HepG2 (cell line): ENCODE measurements at regions of chr22 and their contacts with region 1.

Region 1: DNA sequence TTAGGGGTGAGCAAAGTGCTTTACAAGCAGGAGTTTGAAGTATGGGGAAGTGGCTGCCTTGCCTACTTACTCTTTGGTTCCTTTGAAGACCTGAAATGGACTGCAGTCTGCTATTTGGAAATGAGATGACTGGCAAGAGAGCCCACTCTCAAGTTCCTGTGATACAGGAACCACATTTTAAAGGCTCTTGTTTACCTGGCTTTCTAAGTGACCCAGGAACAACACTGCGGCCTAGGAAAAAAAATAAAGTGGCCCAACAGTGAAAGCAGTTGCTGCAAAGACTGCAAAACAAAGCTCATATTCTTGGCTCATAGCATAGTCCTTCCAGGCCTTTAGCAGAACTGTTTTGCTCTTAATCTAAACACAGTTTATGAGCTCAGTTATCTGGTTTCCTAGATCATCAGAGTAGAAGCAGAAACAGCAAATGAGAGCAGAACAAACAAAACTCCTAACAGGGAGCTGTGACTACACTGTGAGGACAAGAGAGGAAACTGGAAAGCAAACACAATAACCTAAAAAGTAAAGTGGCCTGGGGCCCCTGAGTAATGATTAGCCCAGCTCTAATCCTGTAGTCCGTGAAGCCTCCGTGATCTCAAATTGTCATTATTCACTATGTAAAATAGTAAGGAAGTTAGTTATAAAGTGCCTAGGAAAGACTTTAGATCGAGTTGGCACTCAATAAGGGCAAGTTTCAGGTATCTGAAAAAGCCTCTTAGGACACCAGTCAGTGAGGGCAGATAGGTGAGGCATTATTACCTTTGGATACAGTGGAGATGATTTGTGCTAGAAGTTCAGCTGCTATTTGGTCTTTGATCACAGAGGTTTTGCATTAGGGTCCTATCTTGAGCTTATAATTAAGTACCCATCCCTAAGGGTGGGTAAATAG is 11.5 kb downstream of the CCDC117 start:
- DNase-seq: peak; percentile 96
- ATAC-seq: peak; percentile 98
- H3K4me3 ChIP-seq: peak overlapping the region in 2 of 3 experiments; percentile 17 to 35; a peak in 2 of 6 replicates
- H3K27ac ChIP-seq: peak overlapping the region; percentile 84
- H3K4me1 ChIP-seq: peaks cover 61% of the 10 kb centered on the region
- H3K27me3 ChIP-seq: no peaks in the 10 kb centered on the region
- CTCF ChIP-seq: no peak
- EP300 ChIP-seq: peak in 1 of 2 experiments; percentile 80; a peak in 2 of 4 replicates
- POLR2A ChIP-seq: no peak; a peak in 1 of 4 replicates
- RAD21 ChIP-seq: no peak

Region 2: GRCh38 chr22:28711820-28712777 is 71.9 kb before region 1 on chr22:
- CTCF ChIA-PET with region 1: no interaction called
- POLR2A ChIA-PET with region 1: no interaction called
- in situ Hi-C with region 1: no loop called
- intact Hi-C with region 1: no loop called
- DNase-seq: peak; percentile 97
- ATAC-seq: peak; percentile 97
- H3K4me3 ChIP-seq: peak overlapping the region; percentile 27 to 39 (median 39); a peak in 4 of 6 replicates
- H3K27ac ChIP-seq: peak overlapping the region; percentile 72
- H3K4me1 ChIP-seq: peaks cover 33% of the 10 kb centered on the region
- H3K27me3 ChIP-seq: no peaks in the 10 kb centered on the region
- CTCF ChIP-seq: peak; percentile 15; the same call in 1 of the 2 replicates
- EP300 ChIP-seq: peak in 1 of 2 experiments; percentile 45; a peak in 3 of 4 replicates
- POLR2A ChIP-seq: no peak
- RAD21 ChIP-seq: no peak

Region 3: GRCh38 chr22:28741758-28742561 is 42.1 kb before region 1 on chr22 and contains the starts of genes CHEK2 and HSCB:
- CTCF ChIA-PET with region 1: no interaction called
- POLR2A ChIA-PET with region 1: interaction called, 8 read pairs
- in situ Hi-C with region 1: no loop called
- intact Hi-C with region 1: loop called (anchors 5 kb)
- DNase-seq: peak; percentile 98
- ATAC-seq: peak; percentile 97
- H3K4me3 ChIP-seq: peak within 1 kb of the TSS; percentile 78 to 96 (median 92)
- H3K27ac ChIP-seq: peak within 1 kb of the TSS; percentile 79
- H3K4me1 ChIP-seq: peaks cover 76% of the 10 kb centered on the region
- H3K27me3 ChIP-seq: no peaks in the 10 kb centered on the region
- CTCF ChIP-seq: peak; percentile 52
- EP300 ChIP-seq: no peak
- POLR2A ChIP-seq: peak; percentile 47 to 75; a peak in 3 of 4 replicates
- RAD21 ChIP-seq: no peak
- total RNA-seq, gene CHEK2: 40.5 and 53.3 TPM in 2 replicates
- total RNA-seq, gene HSCB: 20.2 and 20.9 TPM in 2 replicates

Region 4: GRCh38 chr22:28800308-28801077 is 16.5 kb after region 1 on chr22 and contains the start of gene XBP1:
- CTCF ChIA-PET with region 1: no interaction called
- POLR2A ChIA-PET with region 1: interaction called, 140 read pairs
- in situ Hi-C with region 1: no loop called
- intact Hi-C with region 1: no loop called
- DNase-seq: peak; percentile 89
- ATAC-seq: peak; percentile 95
- H3K4me3 ChIP-seq: peak within 1 kb of the TSS; percentile 66 to 99 (median 82)
- H3K27ac ChIP-seq: peak within 1 kb of the TSS; percentile 98
- H3K4me1 ChIP-seq: peaks cover 42% of the 10 kb centered on the region
- H3K27me3 ChIP-seq: no peaks in the 10 kb centered on the region; a peak in 1 of 5 replicates
- CTCF ChIP-seq: no peak
- EP300 ChIP-seq: no peak
- POLR2A ChIP-seq: peak; percentile 91 to 98
- RAD21 ChIP-seq: peak; percentile 49; the same call in 1 of the 2 replicates
- total RNA-seq, gene XBP1: 313 and 427 TPM in 2 replicates

Region 5: DNA sequence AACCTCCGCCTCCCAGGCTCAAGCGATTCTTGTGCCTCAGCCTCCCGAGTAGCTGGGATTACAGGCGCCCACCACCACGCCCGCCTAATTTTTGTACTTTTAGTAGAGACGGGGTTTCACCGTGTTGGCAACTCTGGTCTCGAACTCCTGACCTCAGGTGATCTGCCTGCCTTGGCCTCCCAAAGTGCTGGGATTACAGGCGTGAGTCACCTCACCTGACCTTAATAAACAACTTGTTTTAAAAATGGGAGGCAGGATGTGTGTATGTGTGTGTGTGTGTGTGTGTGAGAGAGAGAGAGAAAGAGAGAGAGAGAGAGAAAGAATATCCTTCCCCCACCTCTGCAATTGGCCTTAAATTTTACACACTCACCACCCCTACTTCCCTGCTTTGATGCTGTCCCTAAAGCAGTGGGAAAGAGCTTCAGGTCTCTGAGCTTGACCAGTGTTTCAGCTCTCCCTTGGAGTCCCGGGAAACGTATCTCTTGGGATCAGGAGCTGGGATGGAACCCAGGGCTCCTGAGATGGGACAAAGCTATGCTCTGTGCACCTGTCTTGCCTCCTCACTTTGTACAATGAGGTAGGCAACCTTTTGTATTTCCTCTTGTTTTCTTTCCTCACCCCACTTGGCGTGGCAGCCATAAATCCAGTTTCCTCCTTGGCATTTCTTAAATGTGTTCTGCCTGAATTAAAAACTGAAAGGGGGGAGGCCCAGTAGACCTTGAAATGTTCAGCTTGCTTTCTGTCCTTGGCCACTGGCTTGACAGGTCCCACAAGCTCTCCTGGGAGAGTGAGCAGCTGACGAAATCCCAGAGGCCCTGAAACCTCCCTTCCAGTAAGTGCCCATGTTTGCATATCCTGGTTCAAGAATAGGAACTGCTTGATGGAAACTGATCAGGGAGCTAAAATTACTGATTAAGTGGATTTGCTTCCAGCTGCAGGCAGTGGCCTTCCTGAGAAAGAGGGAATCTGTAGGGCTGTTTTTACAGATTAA is 34.2 kb after region 1 on chr22:
- CTCF ChIA-PET with region 1: no interaction called
- POLR2A ChIA-PET with region 1: interaction called, 945 read pairs
- in situ Hi-C with region 1: no loop called
- intact Hi-C with region 1: no loop called
- DNase-seq: peak; percentile 79
- ATAC-seq: peak; percentile 33
- H3K4me3 ChIP-seq: peak overlapping the region in 2 of 3 experiments; percentile 42 to 44; a peak in 4 of 6 replicates
- H3K27ac ChIP-seq: peak overlapping the region; percentile 91
- H3K4me1 ChIP-seq: peaks cover 100% of the 10 kb centered on the region
- H3K27me3 ChIP-seq: no peaks in the 10 kb centered on the region
- CTCF ChIP-seq: no peak
- EP300 ChIP-seq: peak in 1 of 2 experiments; percentile 85; a peak in 2 of 4 replicates
- POLR2A ChIP-seq: peak in 1 of 2 experiments; percentile 30; a peak in 1 of 4 replicates
- RAD21 ChIP-seq: 0 out of 2 replicates have a peak, but pooled peaks have one; percentile 4